ENCODE measurements at regions of chr17 and their contacts with region 1.

Region 1: DNA sequence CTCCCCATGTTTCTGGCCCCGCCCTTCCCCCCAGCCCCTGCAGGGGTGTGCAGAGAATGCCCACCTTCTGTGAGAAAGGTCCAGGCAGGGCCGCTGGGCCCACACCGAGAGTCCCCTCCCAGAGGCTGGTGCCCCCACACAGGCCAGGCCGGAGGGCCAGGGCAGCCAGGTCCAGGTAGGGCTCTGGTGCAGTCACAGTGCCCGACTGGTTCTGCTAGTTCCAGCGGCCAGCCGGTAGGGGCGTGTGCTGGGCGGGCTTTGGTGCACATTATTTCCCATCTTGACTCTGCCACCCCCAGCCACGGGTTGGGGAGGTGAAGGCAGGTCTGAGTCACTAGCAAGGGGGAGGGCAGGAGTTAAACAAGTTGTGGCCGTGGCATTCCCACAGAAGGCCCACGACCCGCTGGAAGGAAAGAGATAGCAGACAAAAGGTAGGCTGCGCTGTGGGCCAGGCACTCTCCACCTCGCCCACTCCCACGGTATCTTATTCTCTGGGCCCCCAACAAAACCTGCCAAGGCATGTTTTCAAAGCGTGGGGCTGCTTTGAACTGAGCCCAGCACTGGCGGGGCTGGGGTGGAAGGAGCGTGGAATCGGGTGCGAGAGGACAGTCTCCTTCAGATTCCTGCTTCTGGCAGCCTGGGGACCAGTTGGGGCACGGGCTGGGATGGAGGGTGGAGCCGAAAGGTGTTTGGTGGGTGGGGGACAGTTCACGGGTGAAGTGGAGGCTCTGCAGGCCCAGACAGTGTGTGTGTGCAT is 1.9 kb downstream of the EPN3 start:
- DNase-seq: peak in 1 of 2 experiments; percentile 74
- H3K4me3 ChIP-seq: peak overlapping the region; percentile 36 to 77 (median 74)
- H3K27ac ChIP-seq: no peak overlapping the region
- H3K4me1 ChIP-seq: peaks cover 5 to 29% (median 18%) of the 10 kb centered on the region in 4 experiments
- H3K27me3 ChIP-seq: peaks cover 0 to 21% (median 10%) of the 10 kb centered on the region in 4 experiments; a peak in 4 of 7 replicates
- CTCF ChIP-seq: peak; percentile 61 to 84 (median 76)
- EP300 ChIP-seq: no peak
- POLR2A ChIP-seq: no peak
- RAD21 ChIP-seq: peak; percentile 10 to 25; a peak in 1 of 4 replicates

Region 2: DNA sequence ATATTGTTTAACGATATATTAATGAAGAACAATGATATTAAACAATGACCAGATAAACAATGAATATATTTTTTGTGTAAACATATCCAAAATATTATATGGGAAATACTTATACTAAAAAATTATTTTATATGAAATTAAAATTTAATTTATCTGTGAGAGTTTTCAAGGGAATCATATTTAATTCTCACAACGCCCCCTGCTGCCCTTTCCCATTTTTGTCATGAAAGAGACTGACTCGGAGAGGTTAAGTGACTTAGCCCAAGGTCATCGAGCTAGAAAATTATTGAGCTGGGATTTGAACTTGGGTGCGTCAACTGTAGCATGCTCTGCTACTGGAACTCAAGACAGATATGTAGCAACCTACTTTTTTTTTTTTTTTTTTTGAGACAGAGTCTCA is 33.3 kb before region 1 on chr17:
- CTCF ChIA-PET with region 1: interaction called, 22 read pairs
- POLR2A ChIA-PET with region 1: interaction called, 3 read pairs
- DNase-seq: no peak
- H3K4me3 ChIP-seq: no peak overlapping the region
- H3K27ac ChIP-seq: no peak overlapping the region
- H3K4me1 ChIP-seq: peaks cover 5 to 9% (median 6%) of the 10 kb centered on the region in 4 experiments; a peak in 6 of 7 replicates
- H3K27me3 ChIP-seq: no peaks in the 10 kb centered on the region
- CTCF ChIP-seq: peak in 2 of 3 experiments; percentile 11 to 43; a peak in 2 of 4 replicates
- EP300 ChIP-seq: no peak
- POLR2A ChIP-seq: no peak
- RAD21 ChIP-seq: 0 out of 4 replicates have a peak, but pooled peaks of 1 of the 2 experiments have one; percentile 13

Region 3: DNA sequence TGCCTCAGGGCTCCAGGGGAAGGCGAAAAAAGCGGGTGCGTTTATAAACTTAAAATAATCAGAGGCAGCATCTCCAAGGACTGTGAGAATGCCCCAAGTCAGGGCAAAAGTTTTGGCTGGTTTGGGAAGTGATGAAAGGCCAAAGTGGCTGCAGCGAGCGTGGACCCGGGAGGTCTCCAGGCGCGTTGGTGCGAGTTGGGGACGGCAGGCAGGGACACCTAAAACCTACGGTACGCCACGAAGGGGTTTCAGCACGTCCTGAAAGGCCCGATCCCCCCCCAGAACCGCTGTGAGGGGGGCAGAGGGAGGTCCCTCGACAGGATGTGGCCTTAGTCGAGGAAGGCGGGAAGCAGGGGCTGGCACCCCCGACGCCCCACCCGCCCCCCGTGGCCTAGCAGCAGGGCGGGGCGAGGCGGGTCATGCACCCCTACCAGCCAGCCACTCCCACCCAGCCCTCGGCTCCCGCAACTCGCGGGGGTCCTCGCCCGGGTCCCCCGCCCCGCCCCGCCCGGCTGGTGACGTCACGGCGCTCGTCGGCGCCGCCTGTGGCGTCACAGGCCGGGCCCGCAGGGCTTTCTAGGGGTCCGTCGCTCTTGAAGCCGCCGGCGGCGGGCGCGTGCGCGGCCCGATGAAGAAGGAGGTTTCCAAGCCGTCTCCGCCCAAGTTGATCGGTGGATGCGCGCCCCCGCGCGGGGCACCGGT is 26.4 kb before region 1 on chr17 and contains the start of gene MYCBPAP:
- CTCF ChIA-PET with region 1: interaction called, 22 read pairs
- POLR2A ChIA-PET with region 1: interaction called, 3 read pairs
- DNase-seq: peak; percentile 43 to 87
- H3K4me3 ChIP-seq: peak within 1 kb of the TSS; percentile 69 to 86 (median 75)
- H3K27ac ChIP-seq: no peak within 1 kb of the TSS
- H3K4me1 ChIP-seq: peaks cover 5 to 15% (median 10%) of the 10 kb centered on the region in 4 experiments
- H3K27me3 ChIP-seq: no peaks in the 10 kb centered on the region; a peak in 1 of 7 replicates
- CTCF ChIP-seq: no peak; a peak in 1 of 4 replicates
- EP300 ChIP-seq: no peak
- POLR2A ChIP-seq: peak in 1 of 2 experiments; percentile 53; a peak in 2 of 3 replicates
- RAD21 ChIP-seq: 0 out of 4 replicates have a peak, but pooled peaks of 1 of the 2 experiments have one; percentile 9
- total RNA-seq, gene MYCBPAP: 1.7 and 3.3 TPM in 2 replicates

Region 4: DNA sequence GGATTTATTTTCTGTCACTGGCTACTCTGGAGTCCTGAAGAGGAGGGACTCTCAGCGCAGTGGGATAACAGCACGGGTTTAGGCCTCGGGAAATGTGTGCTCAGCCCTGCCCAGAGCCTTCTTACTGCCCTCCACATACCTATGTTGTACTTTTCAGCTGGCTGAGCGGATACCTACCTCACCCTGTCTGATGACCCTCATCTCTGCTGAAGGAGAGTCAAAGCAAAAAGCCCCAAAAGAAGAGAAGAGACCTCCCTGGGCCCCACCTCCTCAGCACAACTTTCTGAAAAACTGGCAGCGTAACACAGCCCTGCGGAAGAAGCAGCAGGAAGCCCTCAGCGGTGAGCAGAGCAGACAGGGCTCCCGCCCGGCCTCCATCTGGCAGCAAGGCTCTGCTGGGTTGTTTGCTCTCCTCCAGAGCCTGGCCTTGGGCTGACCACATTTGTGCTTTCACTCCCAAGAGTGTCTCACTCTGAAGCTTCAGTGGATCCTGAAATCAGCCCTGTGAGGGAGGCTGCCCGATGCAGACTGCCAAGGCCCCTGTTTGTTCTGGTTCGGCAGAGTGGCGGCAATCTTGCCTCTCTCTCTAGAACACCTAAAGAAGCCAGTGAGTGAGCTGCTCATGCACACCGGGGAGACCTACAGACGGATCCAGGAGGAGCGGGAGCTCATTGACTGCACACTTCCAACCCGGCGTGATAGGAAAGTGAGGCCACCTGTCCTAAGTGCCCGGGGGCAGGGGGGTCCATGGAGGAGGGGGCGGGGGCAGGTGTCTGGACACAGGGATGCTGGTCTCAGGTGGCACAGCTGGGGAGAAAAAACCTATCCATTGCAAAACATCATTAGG is 15.8 kb before region 1 on chr17:
- CTCF ChIA-PET with region 1: interaction called, 11 read pairs
- POLR2A ChIA-PET with region 1: interaction called, 13 read pairs
- DNase-seq: no peak
- H3K4me3 ChIP-seq: no peak overlapping the region
- H3K27ac ChIP-seq: no peak overlapping the region
- H3K4me1 ChIP-seq: peaks cover 0 to 2% (median 0%) of the 10 kb centered on the region in 4 experiments; a peak in 2 of 7 replicates
- H3K27me3 ChIP-seq: no peaks in the 10 kb centered on the region; a peak in 1 of 7 replicates
- CTCF ChIP-seq: no peak
- EP300 ChIP-seq: no peak
- POLR2A ChIP-seq: no peak
- RAD21 ChIP-seq: no peak

Region 5: DNA sequence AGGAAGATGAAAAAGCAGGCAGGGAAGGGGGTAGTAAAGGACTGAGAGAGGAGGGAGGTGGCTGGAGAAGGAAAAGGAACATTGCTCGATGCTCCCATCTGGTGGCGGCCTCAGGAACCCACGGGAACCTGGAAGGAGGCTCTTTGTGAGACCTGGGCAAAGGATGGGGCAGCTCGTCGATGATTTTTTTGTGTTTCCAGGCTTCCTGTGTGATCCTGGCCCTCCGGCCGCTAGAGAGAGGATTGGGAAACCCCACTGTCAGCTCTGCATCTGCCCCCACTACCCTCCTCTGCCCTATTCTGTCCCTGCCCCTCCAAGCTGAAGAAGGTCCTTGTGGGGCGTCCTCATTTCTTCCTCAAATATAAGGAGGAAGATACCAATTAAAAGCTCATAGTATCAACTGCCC is 307.6 kb after region 1 on chr17:
- CTCF ChIA-PET with region 1: no interaction called
- POLR2A ChIA-PET with region 1: no interaction called
- DNase-seq: peak; percentile 53 to 90
- H3K4me3 ChIP-seq: no peak overlapping the region
- H3K27ac ChIP-seq: no peak overlapping the region
- H3K4me1 ChIP-seq: peaks cover 0 to 10% (median 4%) of the 10 kb centered on the region in 4 experiments; a peak in 3 of 7 replicates
- H3K27me3 ChIP-seq: no peaks in the 10 kb centered on the region
- CTCF ChIP-seq: peak; percentile 89 to 91 (median 90)
- EP300 ChIP-seq: no peak
- POLR2A ChIP-seq: no peak
- RAD21 ChIP-seq: peak; percentile 86 to 91